CD8-positive, alpha-beta T cell (primary cell): ENCODE measurements at regions of chr15 and their contacts with region 1.

Region 1: GRCh38 chr15:25933456-25934158 is 70.5 kb upstream of the ATP10A start:
- DNase-seq: peak; percentile 34 to 85 (median 64)
- ATAC-seq: peak; percentile 97
- H3K4me3 ChIP-seq: peak overlapping the region; percentile 29 to 33
- H3K4me3 Mint-ChIP-seq: peak overlapping the region; percentile 86
- H3K27ac ChIP-seq: no peak overlapping the region
- H3K27ac Mint-ChIP-seq: no peak overlapping the region
- H3K4me1 ChIP-seq: peaks cover 7% of the 10 kb centered on the region
- H3K4me1 Mint-ChIP-seq: peaks cover 8% of the 10 kb centered on the region
- H3K27me3 ChIP-seq: no peaks in the 10 kb centered on the region
- H3K27me3 Mint-ChIP-seq: peaks cover 6% of the 10 kb centered on the region
- CTCF ChIP-seq: peak; percentile 67

Region 2: DNA sequence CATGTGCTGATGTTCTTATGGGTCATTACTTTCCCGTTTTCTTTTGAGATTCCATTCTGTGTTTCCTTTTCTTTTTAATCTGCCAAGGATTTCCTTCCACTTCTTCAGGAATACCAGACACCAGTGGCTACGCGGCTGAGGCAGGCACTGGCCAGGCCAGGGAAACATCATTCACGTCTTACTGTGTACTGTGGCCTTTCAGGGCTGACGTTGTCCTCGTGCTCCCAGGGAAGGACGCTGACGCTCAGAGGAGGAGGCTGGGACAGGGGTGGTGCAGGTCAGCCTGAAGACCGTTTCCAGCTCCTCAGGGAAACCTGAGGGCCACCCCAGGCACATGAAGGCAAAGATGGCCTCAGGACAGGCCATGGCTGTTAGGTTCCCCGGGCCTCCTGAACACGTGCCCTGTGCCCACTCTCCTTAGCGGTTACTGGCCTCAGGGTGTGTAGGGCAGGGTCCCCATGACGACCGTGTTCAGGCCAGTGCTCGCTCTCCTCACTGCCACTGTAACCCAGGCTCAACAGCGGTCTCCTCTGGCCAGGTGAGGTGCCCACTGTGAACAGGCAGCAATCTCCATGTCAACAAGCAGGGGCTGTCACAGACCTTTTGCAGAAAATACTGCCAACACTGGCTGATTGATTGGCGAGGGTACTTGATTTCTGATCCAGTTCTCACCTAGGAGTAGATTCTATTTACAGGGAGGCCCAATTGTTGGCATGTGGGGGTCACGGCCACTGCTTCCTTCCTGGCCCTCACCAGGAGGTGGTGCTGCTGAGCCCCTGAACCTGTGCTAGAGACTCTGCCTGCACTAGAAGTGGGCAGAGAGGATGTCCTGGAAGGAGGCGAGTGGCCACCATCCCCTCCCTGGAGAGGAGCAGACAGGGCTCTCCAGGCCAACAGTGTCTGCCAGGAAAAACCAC is 240.0 kb before region 1 on chr15:
- CTCF ChIA-PET with region 1: interaction called, 10 read pairs
- POLR2A ChIA-PET with region 1: no interaction called
- intact Hi-C with region 1: loop called in 1 of 2 experiments (anchors 2 kb)
- DNase-seq: peak in 4 of 9 experiments; percentile 26 to 39 (median 28)
- ATAC-seq: no peak
- H3K4me3 ChIP-seq: no peak overlapping the region
- H3K4me3 Mint-ChIP-seq: no peak overlapping the region
- H3K27ac ChIP-seq: no peak overlapping the region
- H3K27ac Mint-ChIP-seq: no peak overlapping the region
- H3K4me1 ChIP-seq: no peaks in the 10 kb centered on the region
- H3K4me1 Mint-ChIP-seq: no peaks in the 10 kb centered on the region
- H3K27me3 ChIP-seq: no peaks in the 10 kb centered on the region
- H3K27me3 Mint-ChIP-seq: no peaks in the 10 kb centered on the region
- CTCF ChIP-seq: peak; percentile 29

Region 3: GRCh38 chr15:25783607-25784540 is 149.7 kb before region 1 on chr15:
- CTCF ChIA-PET with region 1: interaction called, 18 read pairs
- POLR2A ChIA-PET with region 1: no interaction called
- intact Hi-C with region 1: loop called (anchors 1 kb)
- DNase-seq: peak in 8 of 9 experiments; percentile 18 to 71 (median 50)
- ATAC-seq: peak; percentile 48
- H3K4me3 ChIP-seq: no peak overlapping the region
- H3K4me3 Mint-ChIP-seq: no peak overlapping the region
- H3K27ac ChIP-seq: no peak overlapping the region
- H3K27ac Mint-ChIP-seq: peak overlapping the region; percentile 32
- H3K4me1 ChIP-seq: peaks cover 4% of the 10 kb centered on the region
- H3K4me1 Mint-ChIP-seq: peaks cover 24% of the 10 kb centered on the region
- H3K27me3 ChIP-seq: no peaks in the 10 kb centered on the region
- H3K27me3 Mint-ChIP-seq: no peaks in the 10 kb centered on the region
- CTCF ChIP-seq: peak; percentile 32

Region 4: GRCh38 chr15:25850154-25851111 is 83.2 kb before region 1 on chr15:
- CTCF ChIA-PET with region 1: interaction called, 4 read pairs
- POLR2A ChIA-PET with region 1: interaction called, 3 read pairs
- intact Hi-C with region 1: loop called in 1 of 2 experiments (anchors 5 kb)
- DNase-seq: peak in 8 of 9 experiments; percentile 63 to 86 (median 74)
- ATAC-seq: peak; percentile 54
- H3K4me3 ChIP-seq: peak overlapping the region; percentile 45 to 53
- H3K4me3 Mint-ChIP-seq: peak overlapping the region; percentile 91
- H3K27ac ChIP-seq: peak overlapping the region; percentile 72 to 88
- H3K27ac Mint-ChIP-seq: peak overlapping the region; percentile 98
- H3K4me1 ChIP-seq: peaks cover 80% of the 10 kb centered on the region
- H3K4me1 Mint-ChIP-seq: peaks cover 86% of the 10 kb centered on the region
- H3K27me3 ChIP-seq: no peaks in the 10 kb centered on the region
- H3K27me3 Mint-ChIP-seq: no peaks in the 10 kb centered on the region
- CTCF ChIP-seq: no peak

Region 5: GRCh38 chr15:25909325-25909724 is 24.3 kb before region 1 on chr15:
- CTCF ChIA-PET with region 1: no interaction called
- POLR2A ChIA-PET with region 1: no interaction called
- intact Hi-C with region 1: no loop called
- DNase-seq: no peak
- ATAC-seq: no peak
- H3K4me3 ChIP-seq: no peak overlapping the region
- H3K4me3 Mint-ChIP-seq: no peak overlapping the region
- H3K27ac ChIP-seq: no peak overlapping the region
- H3K27ac Mint-ChIP-seq: no peak overlapping the region
- H3K4me1 ChIP-seq: no peaks in the 10 kb centered on the region
- H3K4me1 Mint-ChIP-seq: no peaks in the 10 kb centered on the region
- H3K27me3 ChIP-seq: no peaks in the 10 kb centered on the region
- H3K27me3 Mint-ChIP-seq: no peaks in the 10 kb centered on the region
- CTCF ChIP-seq: no peak

Region 6: GRCh38 chr15:26070095-26070532 is 136.5 kb after region 1 on chr15:
- CTCF ChIA-PET with region 1: no interaction called
- POLR2A ChIA-PET with region 1: no interaction called
- intact Hi-C with region 1: no loop called
- DNase-seq: no peak
- ATAC-seq: no peak
- H3K4me3 ChIP-seq: no peak overlapping the region
- H3K4me3 Mint-ChIP-seq: no peak overlapping the region
- H3K27ac ChIP-seq: no peak overlapping the region
- H3K27ac Mint-ChIP-seq: no peak overlapping the region
- H3K4me1 ChIP-seq: no peaks in the 10 kb centered on the region
- H3K4me1 Mint-ChIP-seq: no peaks in the 10 kb centered on the region
- H3K27me3 ChIP-seq: no peaks in the 10 kb centered on the region
- H3K27me3 Mint-ChIP-seq: peaks cover 14% of the 10 kb centered on the region
- CTCF ChIP-seq: no peak

Region 7: GRCh38 chr15:26082221-26083109 is 148.9 kb after region 1 on chr15:
- CTCF ChIA-PET with region 1: interaction called, 4 read pairs
- POLR2A ChIA-PET with region 1: no interaction called
- intact Hi-C with region 1: loop called in 1 of 2 experiments (anchors 5 kb)
- DNase-seq: peak; percentile 86 to 96 (median 94)
- ATAC-seq: peak; percentile 96
- H3K4me3 ChIP-seq: peak overlapping the region; percentile 74 to 81
- H3K4me3 Mint-ChIP-seq: peak overlapping the region; percentile 91
- H3K27ac ChIP-seq: peak overlapping the region; percentile 70 to 71
- H3K27ac Mint-ChIP-seq: peak overlapping the region; percentile 94
- H3K4me1 ChIP-seq: peaks cover 14% of the 10 kb centered on the region
- H3K4me1 Mint-ChIP-seq: peaks cover 48% of the 10 kb centered on the region
- H3K27me3 ChIP-seq: no peaks in the 10 kb centered on the region
- H3K27me3 Mint-ChIP-seq: peaks cover under 1% of the 10 kb centered on the region
- CTCF ChIP-seq: no peak